Activated CD4-positive, alpha-beta T cell treated with anti-CD3 and anti-CD28 coated beads, Interleukin-2, amount 10 ng/mL, durations not matched to agents 24 days and 14 days (primary cell): ENCODE measurements at regions of chr10 and their contacts with region 1.

Region 1: DNA sequence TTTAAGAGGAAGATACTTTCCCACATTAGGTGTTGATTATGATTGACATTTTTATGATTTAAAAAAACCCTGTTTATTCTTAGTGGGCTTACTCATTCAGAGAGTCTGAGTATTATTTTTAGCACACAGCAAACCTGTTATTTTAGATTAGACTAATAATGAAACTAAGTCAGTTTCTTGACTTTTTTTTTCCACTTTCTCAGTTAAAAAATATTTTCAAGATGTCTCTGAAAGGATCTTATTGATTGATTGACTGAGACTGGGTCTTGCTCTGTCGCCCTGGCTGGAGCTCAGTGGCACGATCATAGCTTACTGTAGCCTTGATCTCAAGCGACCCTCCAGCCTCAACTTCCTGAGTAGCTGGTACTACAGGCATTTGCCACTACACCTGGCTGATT is 20.4 kb upstream of the INPP5F start:
- DNase-seq: peak; percentile 72
- H3K4me3 Mint-ChIP-seq: peak overlapping the region; percentile 75
- H3K27ac Mint-ChIP-seq: peak overlapping the region; percentile 99
- H3K4me1 Mint-ChIP-seq: peaks cover 56% of the 10 kb centered on the region
- H3K27me3 Mint-ChIP-seq: no peaks in the 10 kb centered on the region

Region 2: DNA sequence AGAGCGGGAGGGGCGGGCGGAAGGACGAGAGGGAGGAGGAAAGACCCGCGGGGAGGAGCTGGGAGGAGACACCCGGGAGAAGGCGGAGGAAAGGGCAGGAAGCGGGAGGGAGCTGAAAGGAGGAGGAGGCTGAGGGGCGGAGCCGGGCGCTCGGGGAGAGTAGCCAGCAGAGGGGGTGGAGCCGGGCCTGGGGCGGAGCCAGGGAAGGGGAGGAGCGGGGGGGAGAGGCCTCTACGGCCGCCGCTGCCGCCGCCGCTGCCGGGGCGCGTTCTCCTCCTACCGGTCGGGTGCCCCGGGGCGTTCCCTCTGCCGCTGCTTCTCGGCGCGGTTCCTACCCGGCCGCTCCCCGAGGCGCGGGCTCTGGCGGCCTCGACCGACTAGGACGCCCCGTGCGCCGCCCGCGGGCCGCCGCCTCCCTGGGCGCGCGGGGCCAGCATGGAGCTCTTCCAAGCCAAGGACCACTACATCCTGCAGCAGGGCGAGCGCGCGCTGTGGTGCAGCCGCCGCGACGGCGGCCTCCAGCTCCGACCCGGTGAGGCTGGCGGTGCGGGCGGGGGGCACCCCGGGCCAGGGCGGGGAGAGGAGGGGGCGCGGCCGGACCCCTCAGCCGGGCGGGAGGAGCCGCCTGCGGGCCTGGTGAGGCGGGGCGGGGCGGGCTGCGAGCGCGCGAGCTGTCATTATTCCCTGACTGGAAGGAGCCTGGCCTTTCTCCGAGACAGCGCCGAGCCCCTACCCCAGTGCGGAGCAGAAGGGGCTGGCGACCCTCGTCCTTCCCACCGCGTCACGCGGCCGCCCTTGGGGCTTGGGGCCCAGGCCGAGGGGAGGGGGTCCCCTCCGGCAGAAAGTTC is 20.6 kb after region 1 on chr10 and contains the start of gene INPP5F:
- intact Hi-C with region 1: loop called (anchors 1 kb)
- DNase-seq: peak; percentile 100
- H3K4me3 Mint-ChIP-seq: peak within 1 kb of the TSS; percentile 91
- H3K27ac Mint-ChIP-seq: peak within 1 kb of the TSS; percentile 86
- H3K4me1 Mint-ChIP-seq: peaks cover 37% of the 10 kb centered on the region
- H3K27me3 Mint-ChIP-seq: no peaks in the 10 kb centered on the region
- total RNA-seq, gene INPP5F: 18.1 and 18.3 TPM in 2 replicates